ENCODE measurements at regions of chr22 and their contacts with region 1.

Region 1: DNA sequence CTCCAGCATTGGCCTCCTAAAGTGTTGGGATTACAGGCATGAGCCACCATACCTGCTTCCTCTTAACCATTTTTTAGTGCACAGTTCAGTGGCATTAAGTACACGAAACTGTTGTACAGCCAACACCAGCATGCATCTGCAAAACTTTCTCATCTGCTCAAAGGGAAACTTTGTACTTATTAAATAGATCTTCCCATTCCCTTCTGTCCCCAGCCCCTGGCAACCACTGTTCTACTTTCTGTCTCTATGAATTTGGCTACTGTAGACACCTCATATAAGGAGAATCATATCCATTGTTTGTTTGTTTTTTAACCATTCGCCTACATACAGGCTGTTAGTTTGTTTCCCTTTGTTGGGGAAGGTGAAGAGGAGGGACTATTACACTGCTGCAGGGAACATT is 6.5 kb upstream of the EP300 start:
- DNase-seq: no peak
- ATAC-seq: no peak
- H3K4me3 ChIP-seq: no peak overlapping the region
- H3K27ac ChIP-seq: no peak overlapping the region
- H3K4me1 ChIP-seq: no peaks in the 10 kb centered on the region
- H3K27me3 ChIP-seq: no peaks in the 10 kb centered on the region
- CTCF ChIP-seq: no peak

Region 2: DNA sequence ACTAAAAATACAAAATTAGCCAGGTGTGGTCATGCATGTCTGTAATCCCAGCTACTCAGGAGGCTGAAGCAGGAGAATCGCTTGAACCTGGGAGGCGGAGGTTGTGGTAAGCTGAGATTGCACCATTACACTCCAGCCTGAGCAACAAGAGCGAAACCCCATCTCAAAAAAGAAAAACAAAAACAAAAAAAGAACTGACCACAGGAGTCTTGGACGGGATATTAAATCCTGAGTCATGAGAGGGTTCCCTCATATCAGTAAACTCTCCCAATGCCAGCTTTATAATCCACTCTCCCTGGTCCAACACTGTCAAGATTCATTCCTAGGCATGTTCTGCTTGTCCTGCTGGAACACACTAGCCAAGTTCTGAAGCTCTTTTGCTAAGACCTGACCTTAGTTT is 55.0 kb before region 1 on chr22:
- intact Hi-C with region 1: loop called in 1 of 3 experiments (anchors 10 kb)
- DNase-seq: no peak
- ATAC-seq: no peak
- H3K4me3 ChIP-seq: no peak overlapping the region
- H3K27ac ChIP-seq: no peak overlapping the region
- H3K4me1 ChIP-seq: no peaks in the 10 kb centered on the region
- H3K27me3 ChIP-seq: no peaks in the 10 kb centered on the region
- CTCF ChIP-seq: no peak

Region 3: GRCh38 chr22:41123151-41123550 is 37.3 kb after region 1 on chr22:
- intact Hi-C with region 1: no loop called
- DNase-seq: no peak
- ATAC-seq: no peak
- H3K4me3 ChIP-seq: no peak overlapping the region
- H3K27ac ChIP-seq: no peak overlapping the region
- H3K4me1 ChIP-seq: no peaks in the 10 kb centered on the region
- H3K27me3 ChIP-seq: no peaks in the 10 kb centered on the region
- CTCF ChIP-seq: no peak

Region 4: DNA sequence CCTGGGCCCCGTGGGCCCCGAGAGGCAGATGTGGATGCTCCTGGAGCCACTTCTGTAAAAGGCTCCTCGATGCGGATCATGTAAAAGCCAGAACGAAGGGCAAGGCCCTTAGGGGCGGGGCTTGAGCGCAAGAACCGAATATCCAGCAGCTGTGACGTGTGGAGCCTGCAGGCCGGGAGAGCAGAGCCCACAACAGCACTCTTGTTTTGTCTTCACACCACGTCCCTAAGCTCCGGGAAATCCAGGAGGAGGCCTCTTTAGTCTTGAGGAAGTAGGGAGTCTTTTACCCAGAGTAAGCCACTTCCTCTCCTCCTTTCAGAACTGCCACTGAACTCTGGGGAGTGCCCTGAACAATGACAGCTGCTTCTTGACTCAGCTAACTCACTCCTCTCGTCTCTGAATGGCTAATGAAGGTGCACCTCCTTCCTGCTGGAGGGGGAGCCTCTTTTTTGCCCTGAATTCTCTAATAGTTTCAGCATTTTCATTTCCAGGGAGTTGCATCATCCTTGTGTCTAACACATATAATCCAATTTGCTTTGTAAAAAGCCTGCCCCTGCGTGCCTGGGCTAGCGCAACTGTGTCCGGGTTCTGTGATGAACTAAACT is 131.8 kb after region 1 on chr22:
- intact Hi-C with region 1: no loop called
- DNase-seq: no peak
- ATAC-seq: peak in 3 of 4 donors; percentile 65 to 82 (median 81)
- H3K4me3 ChIP-seq: no peak overlapping the region
- H3K27ac ChIP-seq: peak overlapping the region in 2 of 4 donors; percentile 1 to 57
- H3K4me1 ChIP-seq: no peaks in the 10 kb centered on the region
- H3K27me3 ChIP-seq: no peaks in the 10 kb centered on the region
- CTCF ChIP-seq: no peak